Ascending aorta (tissue), 2 donors: ENCODE measurements at regions of chr14 and their contacts with region 1.

Region 1: GRCh38 chr14:77097700-77098528 is at the start of gene CIPC:
- DNase-seq: peak; percentile 99 to 100
- H3K4me3 ChIP-seq: peak within 1 kb of the TSS; percentile 89 to 94
- H3K27ac ChIP-seq: peak within 1 kb of the TSS; percentile 96 to 97
- H3K4me1 ChIP-seq: peaks cover 6 to 37% of the 10 kb centered on the region in 2 donors
- H3K27me3 ChIP-seq: no peaks in the 10 kb centered on the region
- CTCF ChIP-seq: no peak
- total RNA-seq, gene CIPC: 5.0 TPM

Region 2: DNA sequence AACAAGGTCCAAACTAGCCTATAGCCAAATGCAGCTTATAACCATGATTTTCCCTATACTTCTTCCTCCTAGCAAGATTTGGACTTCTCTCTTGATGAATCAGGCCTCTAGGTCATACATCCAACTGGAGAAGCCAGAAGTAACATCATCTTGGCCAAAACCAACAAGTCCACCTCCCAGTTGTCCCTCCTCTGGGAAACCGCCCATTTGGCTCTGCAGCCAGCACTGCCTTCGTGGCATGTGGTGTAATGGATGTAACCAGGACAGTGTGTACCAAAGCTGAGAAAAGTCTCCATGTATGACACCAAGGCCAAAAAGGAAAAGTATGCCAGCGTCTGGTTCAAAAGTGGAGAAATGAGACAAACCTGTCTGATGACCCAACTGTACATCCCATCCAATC is 395.9 kb before region 1 on chr14:
- intact Hi-C with region 1: loop called (anchors 5 kb)
- DNase-seq: peak; percentile 82 to 96
- H3K4me3 ChIP-seq: no peak overlapping the region
- H3K27ac ChIP-seq: peak overlapping the region; percentile 61 to 85
- H3K4me1 ChIP-seq: peaks cover 20 to 38% of the 10 kb centered on the region in 2 donors
- H3K27me3 ChIP-seq: no peaks in the 10 kb centered on the region
- CTCF ChIP-seq: no peak

Region 3: GRCh38 chr14:76812211-76813044 is 285.5 kb before region 1 on chr14 and contains the start of gene ANGEL1:
- intact Hi-C with region 1: loop called (anchors 2 kb)
- DNase-seq: peak; percentile 86 to 98
- H3K4me3 ChIP-seq: peak within 1 kb of the TSS; percentile 76 to 88
- H3K27ac ChIP-seq: peak within 1 kb of the TSS; percentile 74 to 79
- H3K4me1 ChIP-seq: peaks cover 0 to 6% of the 10 kb centered on the region in 2 donors
- H3K27me3 ChIP-seq: no peaks in the 10 kb centered on the region
- CTCF ChIP-seq: no peak
- total RNA-seq, gene ANGEL1: 15.5 TPM

Region 4: GRCh38 chr14:76918751-76919543 is 179.0 kb before region 1 on chr14:
- intact Hi-C with region 1: loop called (anchors 1 kb)
- DNase-seq: peak; percentile 91 to 99
- H3K4me3 ChIP-seq: peak overlapping the region in 1 of 2 donors; percentile 22
- H3K27ac ChIP-seq: peak overlapping the region; percentile 85 to 86
- H3K4me1 ChIP-seq: peaks cover 23 to 39% of the 10 kb centered on the region in 2 donors
- H3K27me3 ChIP-seq: no peaks in the 10 kb centered on the region
- CTCF ChIP-seq: peak in 1 of 3 experiments; percentile 24

Region 5: GRCh38 chr14:77067632-77068514 is 30.0 kb before region 1 on chr14:
- intact Hi-C with region 1: loop called (anchors 2 kb)
- DNase-seq: peak in 1 of 2 donors; percentile 84
- H3K4me3 ChIP-seq: no peak overlapping the region
- H3K27ac ChIP-seq: no peak overlapping the region
- H3K4me1 ChIP-seq: peaks cover 0 to 5% of the 10 kb centered on the region in 2 donors
- H3K27me3 ChIP-seq: no peaks in the 10 kb centered on the region
- CTCF ChIP-seq: peak; percentile 76 to 93 (median 88)

Region 6: DNA sequence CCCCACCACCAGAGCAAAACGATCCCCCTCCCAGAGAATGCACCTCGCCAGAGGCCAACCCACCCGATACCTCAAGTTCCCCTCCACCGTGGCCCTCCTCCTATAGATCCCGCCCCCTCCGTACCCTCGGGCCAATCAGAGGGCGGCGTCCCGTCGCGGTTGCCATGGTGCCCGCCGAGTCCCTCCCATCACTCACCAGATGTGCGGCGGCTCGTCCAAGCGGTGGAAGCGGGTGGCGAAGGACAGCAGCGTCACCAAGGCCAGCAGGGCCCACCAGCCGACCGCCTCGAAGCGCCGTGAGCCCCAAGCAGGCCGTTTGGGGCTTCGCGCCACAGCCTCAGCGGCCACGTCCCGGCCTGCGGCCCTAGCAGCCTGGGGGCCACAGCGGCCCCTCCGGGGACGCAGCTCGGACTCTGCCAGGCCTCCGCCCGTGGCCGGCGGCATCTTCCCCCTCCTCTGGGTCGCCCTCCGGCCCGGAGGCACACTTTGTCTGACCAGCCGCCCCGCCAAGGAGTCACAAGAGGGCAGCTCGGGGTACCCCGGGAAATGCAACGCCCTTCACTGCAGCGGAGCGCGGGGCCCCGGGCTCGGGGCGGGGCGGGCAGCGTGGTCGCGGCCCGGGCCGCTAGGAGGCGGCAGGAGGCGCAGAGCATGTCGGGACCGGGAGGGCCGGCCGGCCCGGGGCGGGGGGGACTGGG is 222.5 kb after region 1 on chr14 and contains the start of gene POMT2:
- intact Hi-C with region 1: loop called (anchors 2 kb)
- DNase-seq: peak; percentile 80 to 97
- H3K4me3 ChIP-seq: peak within 1 kb of the TSS; percentile 76 to 99
- H3K27ac ChIP-seq: peak within 1 kb of the TSS; percentile 94 to 97
- H3K4me1 ChIP-seq: peaks cover 0 to 11% of the 10 kb centered on the region in 2 donors
- H3K27me3 ChIP-seq: no peaks in the 10 kb centered on the region
- CTCF ChIP-seq: peak in 1 of 3 experiments; percentile 56
- total RNA-seq, gene POMT2: 28.4 TPM